ENCODE measurements at regions of chr16 and their contacts with region 1.

Region 1: DNA sequence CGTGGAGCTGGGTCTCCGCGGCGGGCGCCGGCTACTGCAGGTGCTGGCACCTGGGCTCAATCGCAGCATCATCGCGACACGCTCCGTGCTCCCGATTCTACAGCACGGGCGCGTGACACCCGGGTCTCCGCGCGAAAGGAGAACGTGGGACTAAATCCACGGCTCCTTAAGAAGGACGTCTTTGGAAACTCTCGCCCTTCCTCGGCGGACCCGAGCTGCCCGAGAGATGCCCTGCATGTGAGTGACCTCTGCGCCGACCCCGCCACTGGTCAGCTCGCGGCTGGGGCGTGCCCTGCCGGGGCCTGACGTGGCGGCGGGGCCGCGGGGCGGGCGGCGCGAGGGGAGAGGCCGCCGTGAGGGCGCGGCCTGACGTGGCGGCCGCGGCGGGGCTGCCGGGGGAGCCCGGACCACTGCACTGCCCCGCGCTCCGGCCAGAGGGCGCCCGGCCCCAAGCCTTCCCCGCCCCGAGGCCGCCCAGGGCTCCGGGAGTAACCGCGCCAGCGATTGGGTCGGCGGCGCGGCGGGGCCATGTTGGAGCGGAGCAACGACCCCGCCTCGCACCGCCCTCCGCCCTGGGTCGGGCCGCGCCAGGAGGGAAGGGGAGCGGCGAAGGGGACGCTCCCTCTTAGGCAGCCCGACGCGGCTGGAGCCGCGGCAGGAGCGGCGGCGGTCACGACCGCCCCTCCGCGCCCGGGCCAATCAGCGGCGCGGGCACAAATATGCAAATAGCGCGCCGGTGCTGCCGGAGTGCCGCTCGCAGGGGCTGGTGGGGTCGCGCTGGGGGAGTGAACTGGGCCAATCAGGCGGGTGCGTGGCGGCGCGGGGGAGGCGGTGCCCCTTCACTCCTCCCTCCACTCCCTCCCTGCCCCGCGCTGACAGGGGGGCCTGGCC is 75.6 kb downstream of the CHD9 start:
- DNase-seq: peak; percentile 97
- H3K4me3 ChIP-seq: peak overlapping the region; percentile 83 to 86
- H3K27ac ChIP-seq: peak overlapping the region; percentile 93 to 94
- H3K4me1 ChIP-seq: no peaks in the 10 kb centered on the region
- H3K27me3 ChIP-seq: no peaks in the 10 kb centered on the region
- CTCF ChIP-seq: peak; percentile 44 to 95 (median 78)
- POLR2A ChIP-seq: peak; percentile 67

Region 2: DNA sequence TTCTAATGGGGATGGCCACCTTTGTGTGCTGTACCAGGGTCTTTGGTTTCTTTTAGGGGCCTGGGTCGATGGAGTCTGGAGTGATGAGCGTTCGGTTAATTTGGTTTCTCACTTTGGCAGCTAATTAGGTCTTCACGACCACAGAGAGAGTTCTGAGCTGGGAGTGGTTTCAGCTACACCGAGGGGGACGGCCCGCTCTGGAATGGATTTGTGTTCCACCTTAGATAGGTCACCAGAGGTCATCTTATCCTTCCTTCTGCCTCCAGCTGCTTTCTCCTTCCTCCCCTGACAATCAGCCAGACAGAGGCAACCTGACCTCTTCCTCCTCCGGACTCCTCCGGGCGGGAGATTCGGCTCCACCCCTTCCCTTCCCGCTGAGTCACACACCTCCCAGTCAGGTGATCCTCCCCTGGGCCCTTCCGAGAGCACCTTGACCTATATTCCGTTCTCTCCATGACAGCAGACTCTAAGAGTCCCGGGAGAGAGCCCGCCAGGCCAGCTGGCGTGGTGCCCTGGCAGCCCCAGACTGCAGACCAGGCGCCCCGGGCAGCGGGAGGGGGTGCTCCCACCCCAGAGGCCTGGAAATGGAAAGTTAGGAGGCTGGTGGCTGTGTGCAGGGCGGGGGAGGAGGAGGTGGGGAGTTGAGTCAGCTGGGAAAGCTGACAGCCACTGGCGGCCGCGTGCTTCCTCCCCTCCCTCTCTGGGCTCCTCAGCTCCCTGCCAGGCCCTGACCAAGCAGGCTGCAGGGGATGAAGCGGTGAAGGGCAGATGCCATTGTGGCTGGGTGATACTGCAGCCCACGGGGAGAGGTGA is 30.9 kb before region 1 on chr16:
- intact Hi-C with region 1: loop called (anchors 2 kb)
- DNase-seq: peak; percentile 96
- H3K4me3 ChIP-seq: peak overlapping the region; percentile 28 to 35
- H3K27ac ChIP-seq: peak overlapping the region; percentile 91 to 92
- H3K4me1 ChIP-seq: peaks cover 22% of the 10 kb centered on the region
- H3K27me3 ChIP-seq: no peaks in the 10 kb centered on the region
- CTCF ChIP-seq: no peak
- POLR2A ChIP-seq: no peak

Region 3: DNA sequence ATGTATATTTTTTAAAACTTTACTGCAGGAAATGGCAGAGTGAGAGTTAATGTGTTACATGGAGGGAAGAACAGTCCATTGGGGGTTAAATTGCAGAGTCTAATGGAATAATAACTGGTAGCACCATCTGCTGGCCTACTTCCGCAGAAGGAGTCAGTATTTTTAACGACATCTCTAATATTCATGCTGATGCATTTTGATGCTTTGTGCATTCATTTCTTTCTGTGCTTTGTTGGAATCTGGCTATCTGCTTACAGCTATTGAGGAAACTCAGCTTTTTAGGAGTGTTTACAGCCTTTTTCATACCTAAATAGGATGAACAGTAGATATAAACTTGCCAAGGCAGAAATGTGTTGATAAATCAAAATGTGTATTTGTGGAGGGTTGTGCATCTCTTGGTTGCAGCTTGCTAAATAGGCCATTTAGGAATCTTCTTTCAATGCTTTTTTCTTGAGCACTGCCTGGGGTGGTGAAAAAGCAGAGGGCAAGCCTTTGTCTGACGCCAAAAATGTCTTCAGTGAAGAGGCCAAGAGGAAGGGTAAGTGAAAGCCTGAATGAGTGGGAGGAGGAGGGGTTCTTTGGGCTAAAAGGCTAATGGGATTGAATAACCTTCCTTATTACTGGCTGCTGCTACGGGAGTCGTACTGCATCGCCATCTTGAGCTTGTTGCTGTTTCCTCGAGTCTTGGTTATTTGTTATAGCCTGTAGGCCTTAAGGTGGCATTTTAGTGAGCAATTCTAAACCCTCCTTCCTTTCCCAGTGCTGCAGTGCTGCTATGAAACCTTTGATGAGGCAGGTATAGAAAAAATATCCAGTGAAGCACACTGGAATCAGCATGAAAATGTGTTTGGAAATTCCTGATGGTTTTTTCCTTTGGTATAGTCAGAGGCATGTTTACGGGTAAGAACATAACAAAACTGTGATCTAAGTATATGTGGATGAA is 77.7 kb after region 1 on chr16:
- intact Hi-C with region 1: loop called (anchors 2 kb)
- DNase-seq: peak; percentile 65
- H3K4me3 ChIP-seq: peak overlapping the region; percentile 35 to 36
- H3K27ac ChIP-seq: peak overlapping the region; percentile 83 to 87
- H3K4me1 ChIP-seq: no peaks in the 10 kb centered on the region
- H3K27me3 ChIP-seq: no peaks in the 10 kb centered on the region
- CTCF ChIP-seq: peak in 3 of 4 experiments; percentile 44 to 66 (median 61)
- POLR2A ChIP-seq: peak; percentile 29

Region 4: GRCh38 chr16:53503270-53503923 is 373.0 kb after region 1 on chr16:
- intact Hi-C with region 1: loop called (anchors 5 kb)
- DNase-seq: peak; percentile 100
- H3K4me3 ChIP-seq: peak overlapping the region; percentile 84 to 89
- H3K27ac ChIP-seq: peak overlapping the region; percentile 96 to 98
- H3K4me1 ChIP-seq: peaks cover 14% of the 10 kb centered on the region
- H3K27me3 ChIP-seq: no peaks in the 10 kb centered on the region
- CTCF ChIP-seq: peak in 2 of 4 experiments; percentile 4 to 17
- POLR2A ChIP-seq: peak; percentile 96

Measured in prostate gland (tissue), 2 donors.